Activated T-helper 1 cell treated with anti-CD3 and anti-CD28 coated beads, Interleukin-12 subunit alpha, Interleukin-12 subunit beta, Interleukin-2, Interleukin-4 antibody, amounts not matched to agents 30 ng/mL and 10 ng/mL and 1 ng/mL, durations not matched to agents 14 hours and 24 hours and 36 hours (primary cell): ENCODE measurements at regions of chr6 and their contacts with region 1.

Region 1: DNA sequence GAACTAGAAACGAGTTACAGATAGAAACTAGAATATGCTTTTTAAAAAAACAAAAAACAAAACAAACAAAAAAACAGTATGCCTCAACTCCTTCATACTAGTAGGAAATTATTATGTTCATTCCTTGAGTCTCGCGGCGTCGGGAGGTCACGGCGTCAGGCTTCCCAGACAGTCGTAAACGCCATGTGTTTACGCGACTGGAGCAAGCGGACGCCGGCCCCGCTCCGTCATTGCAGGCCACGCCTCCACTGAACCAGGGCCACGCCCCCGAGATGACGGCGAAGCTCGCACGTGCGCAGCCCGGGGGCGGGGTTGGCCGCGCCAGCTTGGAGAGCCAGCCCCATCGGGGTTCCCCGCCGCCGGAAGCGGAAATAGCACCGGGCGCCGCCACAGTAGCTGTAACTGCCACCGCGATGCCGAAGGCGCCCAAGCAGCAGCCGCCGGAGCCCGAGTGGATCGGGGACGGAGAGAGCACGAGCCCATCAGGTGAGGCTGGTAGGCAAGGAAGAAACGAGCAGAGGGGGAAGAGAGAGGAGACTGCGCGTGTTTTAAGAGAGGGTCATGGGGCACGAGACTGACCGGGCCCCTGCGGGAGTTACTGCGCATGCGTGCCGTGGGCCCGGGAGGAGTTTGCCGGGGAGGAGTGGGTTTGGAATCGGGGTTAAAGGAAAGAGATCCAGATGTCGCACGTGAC is at the start of gene ABCF1:
- DNase-seq: peak; percentile 100
- H3K4me3 Mint-ChIP-seq: peak within 1 kb of the TSS; percentile 98
- H3K27ac Mint-ChIP-seq: peak within 1 kb of the TSS; percentile 98
- H3K4me1 Mint-ChIP-seq: peaks cover 62% of the 10 kb centered on the region
- H3K27me3 Mint-ChIP-seq: no peaks in the 10 kb centered on the region
- total RNA-seq, gene ABCF1: 115 and 120 TPM in 2 replicates

Region 2: GRCh38 chr6:30489081-30490025 is 81.9 kb before region 1 on chr6 and contains the start of gene HLA-E:
- intact Hi-C with region 1: loop called (anchors 1 kb)
- DNase-seq: peak; percentile 91
- H3K4me3 Mint-ChIP-seq: peak within 1 kb of the TSS; percentile 97
- H3K27ac Mint-ChIP-seq: peak within 1 kb of the TSS; percentile 99
- H3K4me1 Mint-ChIP-seq: peaks cover 64% of the 10 kb centered on the region
- H3K27me3 Mint-ChIP-seq: peaks cover 3% of the 10 kb centered on the region
- total RNA-seq, gene HLA-E: 476 and 483 TPM in 2 replicates

Region 3: DNA sequence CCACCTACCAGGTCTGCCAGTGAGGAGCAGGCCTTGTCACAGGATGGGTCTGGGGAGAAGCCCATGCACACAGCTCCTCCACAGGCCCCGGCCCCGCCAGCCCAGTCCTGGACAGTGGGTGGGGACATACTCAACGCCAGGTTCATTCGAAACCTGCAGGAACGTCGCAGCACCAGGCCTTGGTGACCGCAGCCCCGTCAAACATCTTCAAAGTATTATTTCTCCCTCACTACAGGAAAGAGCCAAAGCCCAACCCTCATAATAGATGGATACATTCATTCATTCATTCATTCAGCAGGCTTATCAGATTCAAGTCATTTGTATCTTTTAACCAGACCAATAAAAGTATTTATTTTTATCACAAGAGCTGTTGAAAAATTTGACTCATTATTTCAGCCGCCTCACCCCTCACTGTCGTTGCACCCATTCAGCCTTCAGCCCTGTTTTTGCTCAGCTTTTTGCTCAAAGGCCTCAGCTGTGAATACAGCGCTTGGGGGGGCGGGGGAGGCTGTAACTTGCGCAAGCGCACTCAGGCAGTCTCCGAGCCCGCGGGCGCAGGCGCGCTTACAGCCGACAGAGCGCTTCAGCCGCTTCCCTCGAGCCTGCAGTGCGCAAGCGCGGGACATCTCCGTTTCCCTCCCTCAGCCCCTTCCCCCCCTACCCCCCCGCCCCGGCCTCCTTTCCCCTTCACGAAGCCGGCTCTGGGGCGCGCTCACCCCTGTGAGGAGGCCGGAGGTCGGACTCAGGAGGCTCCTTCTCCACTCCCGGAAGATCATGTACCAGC is 75.4 kb after region 1 on chr6 and contains the start of gene C6orf136:
- intact Hi-C with region 1: loop called (anchors 1 kb)
- DNase-seq: peak; percentile 89
- H3K4me3 Mint-ChIP-seq: peak within 1 kb of the TSS; percentile 90
- H3K27ac Mint-ChIP-seq: peak within 1 kb of the TSS; percentile 91
- H3K4me1 Mint-ChIP-seq: peaks cover 23% of the 10 kb centered on the region
- H3K27me3 Mint-ChIP-seq: no peaks in the 10 kb centered on the region
- total RNA-seq, gene C6orf136: 23.9 and 36.0 TPM in 2 replicates

Region 4: GRCh38 chr6:30686908-30687658 is 115.9 kb after region 1 on chr6:
- intact Hi-C with region 1: loop called (anchors 2 kb)
- DNase-seq: peak; percentile 83
- H3K4me3 Mint-ChIP-seq: peak overlapping the region; percentile 94
- H3K27ac Mint-ChIP-seq: peak overlapping the region; percentile 87
- H3K4me1 Mint-ChIP-seq: peaks cover 50% of the 10 kb centered on the region
- H3K27me3 Mint-ChIP-seq: no peaks in the 10 kb centered on the region